ENCODE measurements at regions of chr19 and their contacts with region 1.

Region 1: DNA sequence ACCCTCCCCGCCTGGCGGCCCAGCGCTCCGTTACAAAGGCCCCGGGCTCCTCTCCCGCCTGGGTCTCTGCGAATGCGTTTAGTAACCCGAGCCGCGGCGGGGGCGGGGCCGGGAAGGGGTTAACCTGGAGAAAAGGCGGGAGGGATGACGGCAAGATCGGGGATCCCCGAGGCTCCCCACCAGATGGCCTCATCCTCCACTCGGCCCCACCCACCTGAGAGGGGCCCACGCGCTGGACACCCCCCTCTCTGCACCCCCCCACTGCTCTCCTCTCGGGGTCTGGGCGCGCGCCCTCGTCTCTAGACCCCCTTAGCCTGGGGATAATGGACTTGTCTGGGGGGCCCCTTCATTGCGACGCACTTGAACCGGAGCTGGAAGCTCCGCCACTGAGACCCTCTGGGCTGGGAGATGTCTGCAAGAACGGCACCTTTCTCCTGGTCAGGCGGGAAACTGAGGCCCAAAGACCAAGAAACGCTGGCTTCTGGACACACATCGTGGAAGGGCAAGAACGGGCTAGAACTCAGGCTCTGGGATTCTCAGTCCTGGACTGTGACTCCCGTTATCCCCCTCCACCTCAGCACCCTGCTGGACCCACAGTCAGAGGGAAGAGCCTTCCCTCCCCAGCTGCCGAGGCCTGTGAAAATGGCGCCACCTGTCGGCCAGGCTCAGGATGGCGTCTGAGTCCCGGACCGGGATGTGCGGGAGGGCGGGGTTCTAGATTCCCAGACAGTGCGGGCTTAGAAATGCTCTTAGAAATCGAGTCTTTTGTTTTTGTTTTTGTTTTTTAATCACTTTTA is 2.9 kb upstream of the LTBP4 start:
- DNase-seq: peak; percentile 68 to 96 (median 76)
- ATAC-seq: peak; percentile 70
- H3K4me3 ChIP-seq: peak overlapping the region; percentile 48
- H3K27ac ChIP-seq: peak overlapping the region; percentile 70; the same call in 2 of the 3 replicates
- H3K4me1 ChIP-seq: peaks cover 45 to 82% of the 10 kb centered on the region in 2 experiments
- H3K27me3 ChIP-seq: no peaks in the 10 kb centered on the region
- CTCF ChIP-seq: peak; percentile 97 to 99 (median 98)
- EP300 ChIP-seq: peak; percentile 28; the same call in 1 of the 2 replicates
- POLR2A ChIP-seq: no peak; the same call in 1 of the 2 replicates
- RAD21 ChIP-seq: peak; percentile 89 to 94

Region 2: GRCh38 chr19:40529093-40529954 is 69.0 kb before region 1 on chr19:
- CTCF ChIA-PET with region 1: interaction called, 6 read pairs
- POLR2A ChIA-PET with region 1: interaction called, 5 read pairs
- in situ Hi-C with region 1: no loop called
- intact Hi-C with region 1: loop called (anchors 1 kb)
- DNase-seq: peak; percentile 93 to 99 (median 98)
- ATAC-seq: peak; percentile 58
- H3K4me3 ChIP-seq: peak overlapping the region; percentile 28
- H3K27ac ChIP-seq: no peak overlapping the region
- H3K4me1 ChIP-seq: peaks cover 43 to 76% of the 10 kb centered on the region in 2 experiments
- H3K27me3 ChIP-seq: no peaks in the 10 kb centered on the region
- CTCF ChIP-seq: peak; percentile 91 to 94 (median 91)
- EP300 ChIP-seq: no peak; the same call in 1 of the 2 replicates
- POLR2A ChIP-seq: no peak
- RAD21 ChIP-seq: peak; percentile 33 to 59; a peak in 3 of 4 replicates

Region 3: GRCh38 chr19:40549007-40549708 is 49.2 kb before region 1 on chr19:
- CTCF ChIA-PET with region 1: interaction called, 7 read pairs
- POLR2A ChIA-PET with region 1: interaction called, 3 read pairs
- in situ Hi-C with region 1: no loop called
- intact Hi-C with region 1: loop called (anchors 2 kb)
- DNase-seq: peak; percentile 84 to 88 (median 86)
- ATAC-seq: peak; percentile 100
- H3K4me3 ChIP-seq: peak overlapping the region; percentile 35
- H3K27ac ChIP-seq: no peak overlapping the region
- H3K4me1 ChIP-seq: peaks cover 3 to 9% of the 10 kb centered on the region in 2 experiments; a peak in 3 of 5 replicates
- H3K27me3 ChIP-seq: peaks cover 0 to 12% of the 10 kb centered on the region in 2 experiments; a peak in 2 of 5 replicates
- CTCF ChIP-seq: peak; percentile 36 to 90 (median 71); a peak in 5 of 6 replicates
- EP300 ChIP-seq: no peak
- POLR2A ChIP-seq: no peak
- RAD21 ChIP-seq: peak in 1 of 2 experiments; percentile 53; a peak in 2 of 4 replicates

Region 4: DNA sequence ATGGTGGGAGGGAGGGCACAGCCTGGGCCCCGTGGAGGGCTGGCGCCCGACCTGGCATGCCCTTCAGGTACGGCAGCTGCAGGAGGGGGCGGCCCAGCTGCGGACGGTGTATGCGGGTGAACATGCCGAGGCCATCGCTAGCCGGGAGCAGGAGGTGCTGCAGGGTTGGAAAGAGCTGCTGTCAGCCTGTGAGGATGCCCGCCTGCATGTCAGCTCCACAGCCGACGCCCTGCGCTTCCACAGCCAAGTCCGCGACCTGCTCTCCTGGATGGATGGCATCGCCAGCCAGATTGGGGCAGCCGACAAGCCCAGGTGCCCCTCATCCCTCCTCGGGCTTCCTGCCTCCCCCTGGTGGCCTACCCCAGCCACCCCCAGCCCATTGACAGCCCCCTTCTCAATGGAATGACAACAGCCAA is 38.2 kb before region 1 on chr19:
- CTCF ChIA-PET with region 1: no interaction called
- POLR2A ChIA-PET with region 1: no interaction called
- in situ Hi-C with region 1: no loop called
- intact Hi-C with region 1: no loop called
- DNase-seq: no peak
- ATAC-seq: peak; percentile 56; the same call in 2 of the 3 replicates
- H3K4me3 ChIP-seq: no peak overlapping the region
- H3K27ac ChIP-seq: no peak overlapping the region
- H3K4me1 ChIP-seq: peaks cover 0 to 17% of the 10 kb centered on the region in 2 experiments; a peak in 2 of 5 replicates
- H3K27me3 ChIP-seq: peaks cover 12 to 32% of the 10 kb centered on the region in 2 experiments
- CTCF ChIP-seq: no peak
- EP300 ChIP-seq: no peak
- POLR2A ChIP-seq: no peak
- RAD21 ChIP-seq: no peak

Measured in K562 (cell line).